ENCODE measurements at regions of chr10 and their contacts with region 1.

Region 1: DNA sequence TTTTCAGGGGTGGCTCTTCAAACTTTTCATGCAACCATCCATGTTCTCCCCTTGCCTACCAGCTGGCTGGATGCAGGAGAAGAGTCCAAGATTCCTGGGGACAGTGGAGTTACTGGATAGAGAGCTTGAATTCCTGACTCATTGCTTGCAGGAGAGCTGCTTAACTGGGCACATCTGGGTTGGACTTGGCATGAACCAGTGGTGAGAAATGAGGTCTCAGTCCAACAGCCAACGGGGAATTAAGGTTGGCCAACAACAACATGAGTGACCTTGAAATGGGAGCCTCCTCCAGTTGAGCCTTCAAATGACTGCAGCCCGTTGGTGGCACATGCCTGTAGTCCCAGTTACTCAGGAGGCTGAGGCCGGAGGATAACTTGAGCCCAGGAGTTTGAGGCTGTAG is 58.1 kb upstream of the OPN4 start:
- DNase-seq: no peak
- ATAC-seq: peak; percentile 12

Region 2: GRCh38 chr10:86500846-86501245 is 95.4 kb before region 1 on chr10:
- intact Hi-C with region 1: no loop called
- DNase-seq: no peak
- ATAC-seq: no peak

Region 3: DNA sequence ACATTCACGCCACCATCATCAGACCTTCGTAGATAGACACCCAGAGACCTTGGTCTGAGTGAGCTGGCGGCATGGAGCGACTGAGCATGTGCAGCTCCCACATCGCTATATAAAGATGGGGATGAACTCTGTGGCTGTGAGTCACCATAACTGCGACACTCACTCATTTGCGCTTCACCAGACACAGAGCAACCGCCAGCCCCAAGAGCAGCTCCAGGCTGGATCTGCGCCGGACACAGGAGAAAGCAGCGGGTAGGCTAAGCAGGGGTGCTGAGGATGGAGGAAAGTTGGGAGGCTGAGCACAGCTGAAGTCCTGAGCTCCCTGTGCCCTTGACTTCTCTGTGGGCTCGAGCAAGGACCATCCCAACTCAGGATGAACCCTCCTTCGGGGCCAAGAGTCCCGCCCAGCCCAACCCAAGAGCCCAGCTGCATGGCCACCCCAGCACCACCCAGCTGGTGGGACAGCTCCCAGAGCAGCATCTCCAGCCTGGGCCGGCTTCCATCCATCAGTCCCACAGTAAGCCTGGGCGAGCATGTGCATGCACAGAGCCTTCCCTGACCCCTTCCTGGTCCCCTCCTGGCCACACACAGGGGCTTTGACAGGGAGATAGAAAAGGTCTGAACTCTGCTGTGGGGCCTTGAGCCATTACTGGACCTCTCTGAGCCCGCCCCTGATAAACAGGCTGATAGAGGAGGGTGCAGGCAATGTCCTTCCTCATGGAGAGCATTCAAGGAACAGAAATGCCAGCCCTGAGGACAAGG is 58.3 kb after region 1 on chr10 and contains the start of gene OPN4:
- intact Hi-C with region 1: loop called (anchors 2 kb)
- DNase-seq: peak; percentile 51
- ATAC-seq: no peak
- total RNA-seq, gene OPN4: 0.41 TPM

Measured in Right ventricle myocardium inferior (tissue), 1 donor.